ENCODE measurements at regions of chr21 and their contacts with region 1.

Region 1: DNA sequence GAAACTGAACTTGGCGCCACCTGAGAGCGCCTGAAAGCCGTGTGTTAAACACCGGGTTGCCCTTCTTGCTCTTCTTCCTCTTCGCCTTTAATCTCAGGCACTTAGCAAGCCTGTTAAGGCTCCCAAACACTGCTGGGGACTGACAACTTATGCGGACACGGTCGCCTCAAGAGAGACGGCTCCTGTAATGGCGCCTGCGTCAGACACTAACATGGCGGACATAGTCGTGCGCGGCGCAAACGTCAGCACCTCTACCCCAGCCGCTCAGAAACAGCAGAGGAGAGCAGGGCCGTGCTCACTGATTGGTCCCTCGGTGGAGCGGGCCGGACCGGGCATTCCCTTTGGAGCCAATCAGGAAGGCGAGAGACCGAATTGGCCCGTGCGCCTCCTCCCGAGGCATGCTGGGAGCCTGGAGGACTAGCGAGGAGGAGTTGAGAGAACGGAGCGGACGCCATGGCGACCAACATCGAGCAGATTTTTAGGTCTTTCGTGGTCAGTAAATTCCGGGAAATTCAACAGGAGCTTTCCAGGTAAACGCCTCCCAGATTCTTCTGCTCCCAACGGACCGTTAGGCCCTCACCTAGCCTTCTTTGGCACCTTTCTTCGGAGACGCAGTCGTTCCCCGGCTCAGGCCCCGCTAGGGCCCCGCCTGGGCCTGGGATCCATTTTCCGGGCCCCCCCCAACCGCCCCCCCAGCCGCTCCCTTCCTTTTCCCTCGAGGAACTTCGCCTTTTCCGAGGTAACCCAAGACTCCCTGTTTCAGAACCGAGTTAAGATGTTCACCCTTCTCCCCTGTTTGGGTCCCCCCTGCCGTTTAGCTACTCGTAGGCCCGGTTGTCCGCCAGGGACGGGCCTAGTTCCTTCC is at the start of gene SON:
- DNase-seq: peak; percentile 93 to 95
- H3K4me3 ChIP-seq: peak within 1 kb of the TSS; percentile 92
- H3K27ac ChIP-seq: peak within 1 kb of the TSS; percentile 98
- H3K4me1 ChIP-seq: peaks cover 31% of the 10 kb centered on the region
- H3K27me3 ChIP-seq: no peaks in the 10 kb centered on the region
- CTCF ChIP-seq: no peak
- total RNA-seq, gene SON: 131 and 158 TPM in 2 replicates

Region 2: DNA sequence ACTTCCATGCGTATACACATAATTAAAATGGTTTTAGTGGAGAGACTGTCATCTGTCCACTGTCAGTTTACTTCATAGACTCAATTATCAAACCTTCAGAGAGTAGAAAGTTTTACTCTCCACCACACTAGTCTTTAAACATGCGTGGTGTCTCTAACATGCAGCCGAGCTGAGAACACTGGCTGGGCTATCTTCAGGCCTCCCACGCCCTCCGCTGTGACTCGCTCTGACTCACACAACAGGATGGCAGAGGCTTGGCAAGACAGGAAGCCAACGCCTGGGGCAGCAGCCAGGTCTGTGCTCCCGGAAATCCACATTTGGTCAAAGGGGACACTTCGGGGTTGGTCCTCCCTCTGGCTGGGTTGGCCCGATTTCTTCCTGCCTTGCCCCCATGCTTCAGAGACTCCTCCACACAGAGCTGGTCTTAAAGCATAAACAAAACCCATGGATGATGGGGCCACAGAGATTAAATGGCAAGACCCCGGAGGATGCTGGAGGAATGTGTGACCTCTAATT is 162.3 kb before region 1 on chr21:
- CTCF ChIA-PET with region 1: no interaction called
- POLR2A ChIA-PET with region 1: no interaction called
- intact Hi-C with region 1: loop called (anchors 2 kb)
- DNase-seq: peak; percentile 89 to 92
- H3K4me3 ChIP-seq: peak overlapping the region; percentile 19; the same call in 1 of the 2 replicates
- H3K27ac ChIP-seq: peak overlapping the region; percentile 100
- H3K4me1 ChIP-seq: peaks cover 62% of the 10 kb centered on the region
- H3K27me3 ChIP-seq: no peaks in the 10 kb centered on the region
- CTCF ChIP-seq: no peak

Region 3: GRCh38 chr21:33491373-33492102 is 51.3 kb before region 1 on chr21 and contains the start of gene DNAJC28:
- CTCF ChIA-PET with region 1: no interaction called
- POLR2A ChIA-PET with region 1: no interaction called
- intact Hi-C with region 1: loop called (anchors 5 kb)
- DNase-seq: peak; percentile 70 to 90
- H3K4me3 ChIP-seq: peak within 1 kb of the TSS; percentile 63
- H3K27ac ChIP-seq: no peak within 1 kb of the TSS
- H3K4me1 ChIP-seq: no peaks in the 10 kb centered on the region
- H3K27me3 ChIP-seq: no peaks in the 10 kb centered on the region
- CTCF ChIP-seq: no peak
- total RNA-seq, gene DNAJC28: 1.1 and 1.3 TPM in 2 replicates

Region 4: GRCh38 chr21:33578214-33578613 is 35.3 kb after region 1 on chr21:
- CTCF ChIA-PET with region 1: no interaction called
- POLR2A ChIA-PET with region 1: no interaction called
- intact Hi-C with region 1: no loop called
- DNase-seq: no peak
- H3K4me3 ChIP-seq: no peak overlapping the region
- H3K27ac ChIP-seq: peak overlapping the region; percentile 60
- H3K4me1 ChIP-seq: 0 out of 2 replicates have a peak, but pooled peaks cover 5% of the 10 kb centered on the region
- H3K27me3 ChIP-seq: no peaks in the 10 kb centered on the region
- CTCF ChIP-seq: no peak

Region 5: DNA sequence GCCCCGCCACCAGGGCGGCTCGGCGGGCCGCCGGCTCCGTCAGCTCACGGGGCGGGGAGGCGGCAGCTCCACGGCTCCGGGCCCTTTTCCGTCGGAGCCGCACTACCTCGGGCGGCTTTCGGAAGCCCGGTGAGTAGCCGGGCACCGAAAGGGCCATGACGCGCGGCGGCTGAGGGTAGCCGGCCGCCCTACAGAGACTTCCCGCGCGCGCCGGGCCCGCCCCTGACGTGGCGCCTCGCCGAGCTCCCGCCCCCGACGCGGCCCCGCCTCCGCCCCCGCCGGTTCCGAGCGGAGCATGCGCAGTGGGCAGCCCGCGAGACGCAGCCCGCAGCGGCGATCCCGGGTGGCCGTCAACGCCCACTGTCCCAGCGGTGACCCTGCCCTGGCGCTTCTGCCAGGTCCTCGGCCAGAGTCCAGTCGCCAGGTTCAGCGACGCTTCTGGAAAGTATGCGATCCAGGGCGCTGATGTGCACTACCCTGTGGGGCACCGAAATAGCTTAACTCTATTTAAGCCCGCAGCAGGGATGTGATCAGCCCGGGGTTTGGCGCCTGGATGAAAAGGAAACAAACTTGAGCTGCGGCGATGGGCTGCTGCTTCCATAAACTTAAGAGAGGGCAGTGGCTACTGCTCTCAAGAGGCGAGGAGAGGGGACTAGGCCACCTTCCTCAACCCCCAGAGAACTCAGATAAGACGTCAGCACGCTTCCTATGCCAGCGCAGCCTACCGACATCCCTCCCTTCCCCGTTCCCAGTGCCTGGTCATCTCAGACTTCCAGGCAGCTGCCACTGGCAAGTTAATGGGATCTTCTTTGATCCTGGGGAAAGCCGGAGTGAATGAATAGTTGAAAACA is 45.8 kb after region 1 on chr21 and contains the start of gene DONSON:
- CTCF ChIA-PET with region 1: no interaction called
- POLR2A ChIA-PET with region 1: no interaction called
- intact Hi-C with region 1: loop called (anchors 2 kb)
- DNase-seq: peak; percentile 53 to 93
- H3K4me3 ChIP-seq: peak within 1 kb of the TSS; percentile 81
- H3K27ac ChIP-seq: peak within 1 kb of the TSS; percentile 72
- H3K4me1 ChIP-seq: peaks cover 19% of the 10 kb centered on the region
- H3K27me3 ChIP-seq: no peaks in the 10 kb centered on the region
- CTCF ChIP-seq: no peak
- total RNA-seq, gene DONSON: 24.7 and 25.6 TPM in 2 replicates

Region 6: GRCh38 chr21:34170886-34171285 is 628.0 kb after region 1 on chr21:
- CTCF ChIA-PET with region 1: no interaction called
- POLR2A ChIA-PET with region 1: no interaction called
- intact Hi-C with region 1: no loop called
- DNase-seq: no peak
- H3K4me3 ChIP-seq: no peak overlapping the region
- H3K27ac ChIP-seq: no peak overlapping the region
- H3K4me1 ChIP-seq: no peaks in the 10 kb centered on the region
- H3K27me3 ChIP-seq: no peaks in the 10 kb centered on the region
- CTCF ChIP-seq: no peak

Region 7: DNA sequence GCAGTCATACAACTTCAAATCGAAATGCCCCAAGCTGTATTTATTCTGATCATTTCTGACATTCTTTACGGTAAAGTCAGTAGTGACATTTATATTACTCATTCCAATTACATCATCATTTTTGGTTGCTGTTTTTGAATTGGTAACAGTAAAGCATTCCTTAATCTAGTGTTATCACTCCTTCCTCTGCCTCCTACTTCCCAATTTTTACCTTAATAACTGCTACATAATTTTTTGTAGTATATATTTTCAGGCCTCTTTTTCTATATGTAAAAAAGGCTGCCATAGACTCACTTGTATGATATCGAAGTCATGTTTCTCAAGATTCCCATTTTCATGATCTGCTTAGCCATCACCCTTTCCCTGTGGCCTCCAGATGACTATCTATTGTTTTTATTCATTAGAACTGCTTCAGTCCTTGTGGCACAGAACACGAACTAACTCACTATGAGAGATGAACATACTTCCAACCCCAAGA is 1339.1 kb after region 1 on chr21:
- CTCF ChIA-PET with region 1: no interaction called
- POLR2A ChIA-PET with region 1: interaction called, 13 read pairs
- intact Hi-C with region 1: no loop called
- DNase-seq: peak in 1 of 2 experiments; percentile 87
- H3K4me3 ChIP-seq: peak overlapping the region; percentile 97
- H3K27ac ChIP-seq: peak overlapping the region; percentile 99
- H3K4me1 ChIP-seq: peaks cover 69% of the 10 kb centered on the region
- H3K27me3 ChIP-seq: no peaks in the 10 kb centered on the region
- CTCF ChIP-seq: no peak

Measured in PC-9 (cell line).